Dorsolateral prefrontal cortex (tissue), 120 donors: ENCODE measurements at regions of chr4 and their contacts with region 1.

Region 1: GRCh38 chr4:154506253-154506652 is 14.7 kb upstream of the DCHS2 start:
- DNase-seq: no peak
- H3K4me3 ChIP-seq: no peak overlapping the region
- H3K27ac ChIP-seq: no peak overlapping the region
- H3K27me3 ChIP-seq: peaks cover 0 to 17% (median 0%) of the 10 kb centered on the region in 45 donors
- CTCF ChIP-seq: peak in 53 of 56 donors; percentile 16 to 78 (median 52)

Region 2: DNA sequence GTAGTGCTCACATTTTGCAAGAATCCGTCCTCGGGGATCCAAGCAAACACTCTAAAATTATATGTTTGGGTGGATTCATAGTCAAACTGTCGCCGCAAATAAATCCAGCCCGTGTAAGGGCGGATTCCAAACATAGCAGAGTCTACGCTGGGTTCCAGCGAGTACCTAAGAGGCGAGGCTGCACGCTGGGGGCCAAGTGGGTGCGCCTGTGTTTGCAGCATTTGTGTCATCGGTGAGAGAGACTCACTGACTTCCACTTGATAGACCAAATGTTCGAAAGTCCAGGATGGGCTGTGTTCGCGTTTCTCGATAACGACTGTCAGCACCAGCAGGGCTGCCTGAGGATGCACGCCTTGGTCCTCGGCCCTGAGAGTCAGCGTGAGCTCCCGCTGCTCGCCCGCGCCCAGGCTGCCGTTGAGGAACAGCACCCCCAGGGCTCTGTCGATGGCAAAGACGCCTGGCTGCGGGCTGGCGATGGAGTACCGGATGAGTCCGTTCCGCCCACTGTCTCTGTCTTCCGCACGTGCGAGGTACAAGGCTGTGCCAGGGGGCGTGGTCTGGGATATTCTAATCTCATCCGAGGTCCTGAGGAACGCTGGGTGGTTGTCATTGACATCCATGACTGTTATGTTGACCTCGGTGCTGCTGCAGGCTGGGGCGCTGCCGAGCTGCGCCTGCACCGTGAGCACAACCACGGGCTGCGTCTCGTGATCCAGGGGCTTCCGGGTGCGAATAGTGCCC is 173.4 kb before region 1 on chr4:
- intact Hi-C with region 1: loop called in 1 of 2 experiments (anchors 10 kb)
- DNase-seq: peak; percentile 7 to 64 (median 47)
- H3K4me3 ChIP-seq: peak overlapping the region; percentile 18 to 70 (median 56)
- H3K27ac ChIP-seq: peak overlapping the region in 12 of 59 donors; percentile 1 to 61 (median 27)
- H3K27me3 ChIP-seq: peaks cover 0 to 26% (median 4%) of the 10 kb centered on the region in 45 donors
- CTCF ChIP-seq: peak in 36 of 56 donors; percentile 7 to 55 (median 27)

Region 3: DNA sequence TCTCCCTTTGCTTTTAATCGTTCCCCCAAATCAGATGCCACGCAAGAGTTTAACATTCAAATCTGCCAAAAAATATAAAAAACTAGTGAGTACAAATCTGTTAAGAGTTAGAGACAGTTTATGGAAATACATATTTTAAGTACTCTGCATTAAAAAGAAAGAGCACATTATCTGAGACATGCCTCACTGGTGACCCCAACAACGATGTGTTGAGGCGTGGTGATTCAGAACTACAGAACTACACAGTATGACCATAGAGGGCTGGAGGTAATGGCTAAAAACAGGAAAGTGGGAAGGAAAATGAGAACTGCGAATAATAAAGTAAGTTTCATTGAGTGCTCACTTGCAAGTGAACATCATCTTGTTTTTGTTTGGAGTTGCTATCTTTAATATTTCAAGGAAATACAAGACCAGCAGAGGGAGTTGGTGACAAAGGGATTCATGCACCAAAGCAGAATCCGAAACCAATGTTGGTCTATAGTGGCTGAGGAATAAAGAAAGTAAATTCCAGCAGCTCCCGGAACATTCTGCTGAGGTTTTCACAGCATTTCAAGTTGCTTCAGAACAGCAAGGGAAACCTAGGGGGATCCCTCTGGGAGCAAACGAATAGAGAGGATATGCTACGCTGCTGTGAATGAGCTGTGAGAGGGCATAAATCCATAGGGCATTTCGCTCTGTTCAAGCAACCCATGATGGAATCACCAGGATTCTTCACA is 106.8 kb before region 1 on chr4:
- intact Hi-C with region 1: loop called (anchors 2 to 10 kb)
- DNase-seq: no peak
- H3K4me3 ChIP-seq: peak overlapping the region in 28 of 59 donors; percentile 1 to 56 (median 35)
- H3K27ac ChIP-seq: peak overlapping the region in 11 of 59 donors; percentile 4 to 67 (median 42)
- H3K27me3 ChIP-seq: peaks cover 0 to 5% (median 0%) of the 10 kb centered on the region in 45 donors
- CTCF ChIP-seq: peak in 55 of 56 donors; percentile 16 to 70 (median 46)

Region 4: GRCh38 chr4:154416190-154416547 is 90.1 kb before region 1 on chr4:
- intact Hi-C with region 1: loop called in 1 of 2 experiments (anchors 5 kb)
- DNase-seq: no peak
- H3K4me3 ChIP-seq: peak overlapping the region; percentile 36 to 77 (median 58)
- H3K27ac ChIP-seq: peak overlapping the region in 32 of 59 donors; percentile 8 to 77 (median 58)
- H3K27me3 ChIP-seq: no peaks in the 10 kb centered on the region
- CTCF ChIP-seq: peak in 5 of 56 donors; percentile 7 to 24 (median 14)